Left colon (tissue), 2 donors: ENCODE measurements at regions of chr20 and their contacts with region 1.

Region 1: GRCh38 chr20:48620519-48621254 is 207.1 kb downstream of the PREX1 start:
- DNase-seq: peak; percentile 86 to 92
- ATAC-seq: peak; percentile 90

Region 2: DNA sequence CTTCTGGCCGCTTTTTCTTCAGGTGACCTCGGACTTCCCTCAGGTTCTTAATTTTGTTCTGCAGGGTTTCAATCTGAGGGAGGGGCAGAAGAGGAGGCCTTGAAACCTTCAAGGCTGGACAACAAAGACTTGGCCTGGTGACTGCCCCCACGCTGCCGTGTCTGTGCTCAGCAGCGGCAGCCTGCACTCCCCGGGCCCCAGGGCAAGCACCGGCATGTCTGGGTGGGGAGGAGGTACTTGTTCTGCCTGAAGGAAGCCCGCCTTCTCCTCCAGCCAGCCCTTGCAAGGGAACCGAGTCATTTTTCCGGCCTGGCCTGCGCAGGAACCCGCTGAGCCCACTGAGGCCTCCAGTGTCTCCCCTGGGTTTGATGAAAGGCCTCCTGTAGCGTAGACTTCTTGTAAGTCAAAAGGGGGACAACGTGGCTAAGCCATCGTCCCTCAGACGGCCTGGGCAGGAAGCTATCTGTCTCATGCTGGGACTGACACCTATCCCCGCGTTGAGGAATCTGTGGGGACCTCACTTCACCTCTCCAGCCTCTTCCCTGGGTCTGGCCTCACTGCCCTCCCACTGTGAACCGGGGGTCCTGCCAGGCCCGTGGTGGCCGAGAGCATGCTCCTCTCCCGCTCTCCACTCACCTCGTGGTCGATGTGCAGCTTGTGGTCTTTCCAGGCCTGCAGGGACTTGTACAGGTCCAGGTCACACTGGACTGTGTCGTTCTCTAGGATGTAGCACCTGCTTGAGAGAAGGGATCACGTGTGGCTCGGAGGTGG is 955.3 kb before region 1 on chr20:
- intact Hi-C with region 1: loop called in 1 of 2 experiments (anchors 5 kb)
- DNase-seq: no peak
- ATAC-seq: no peak

Region 3: DNA sequence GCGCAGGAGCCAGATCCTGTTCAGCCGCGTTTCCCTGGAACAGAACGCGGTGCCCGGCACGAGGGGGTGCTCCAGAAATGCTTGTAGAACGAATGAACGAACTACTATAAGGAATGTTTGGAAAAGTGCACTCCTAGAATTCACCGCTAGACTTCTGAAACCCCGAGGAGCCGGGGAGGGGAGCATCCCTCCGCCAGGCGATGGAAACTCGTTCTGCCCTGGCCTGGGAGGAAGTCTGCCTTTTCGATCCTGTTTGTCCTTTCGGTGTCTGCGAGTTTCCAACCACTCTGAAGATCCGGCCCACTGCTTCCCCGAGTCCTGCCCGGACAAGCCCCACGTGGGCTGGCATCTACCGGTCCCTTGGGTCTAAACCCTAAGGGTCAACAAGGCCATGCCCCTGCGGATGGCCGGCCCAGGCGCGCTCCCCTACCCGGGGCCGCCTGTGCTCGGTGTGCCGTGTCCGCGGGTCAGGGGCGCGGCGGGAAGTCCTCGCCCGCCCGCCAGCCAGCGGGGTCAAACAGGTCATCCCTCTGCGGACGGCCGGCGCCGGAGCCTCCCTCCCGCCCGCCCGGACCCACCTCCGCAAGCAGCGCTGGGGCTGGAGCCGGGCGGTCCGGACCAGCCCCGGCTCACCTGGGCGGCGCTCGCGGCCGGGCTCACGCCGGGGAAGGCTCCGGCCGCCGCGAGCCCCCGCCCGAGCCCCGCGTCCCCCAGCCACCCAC is 835.9 kb before region 1 on chr20:
- intact Hi-C with region 1: loop called in 1 of 2 experiments (anchors 5 kb)
- DNase-seq: peak in 1 of 2 donors; percentile 41
- ATAC-seq: peak; percentile 37

Region 4: DNA sequence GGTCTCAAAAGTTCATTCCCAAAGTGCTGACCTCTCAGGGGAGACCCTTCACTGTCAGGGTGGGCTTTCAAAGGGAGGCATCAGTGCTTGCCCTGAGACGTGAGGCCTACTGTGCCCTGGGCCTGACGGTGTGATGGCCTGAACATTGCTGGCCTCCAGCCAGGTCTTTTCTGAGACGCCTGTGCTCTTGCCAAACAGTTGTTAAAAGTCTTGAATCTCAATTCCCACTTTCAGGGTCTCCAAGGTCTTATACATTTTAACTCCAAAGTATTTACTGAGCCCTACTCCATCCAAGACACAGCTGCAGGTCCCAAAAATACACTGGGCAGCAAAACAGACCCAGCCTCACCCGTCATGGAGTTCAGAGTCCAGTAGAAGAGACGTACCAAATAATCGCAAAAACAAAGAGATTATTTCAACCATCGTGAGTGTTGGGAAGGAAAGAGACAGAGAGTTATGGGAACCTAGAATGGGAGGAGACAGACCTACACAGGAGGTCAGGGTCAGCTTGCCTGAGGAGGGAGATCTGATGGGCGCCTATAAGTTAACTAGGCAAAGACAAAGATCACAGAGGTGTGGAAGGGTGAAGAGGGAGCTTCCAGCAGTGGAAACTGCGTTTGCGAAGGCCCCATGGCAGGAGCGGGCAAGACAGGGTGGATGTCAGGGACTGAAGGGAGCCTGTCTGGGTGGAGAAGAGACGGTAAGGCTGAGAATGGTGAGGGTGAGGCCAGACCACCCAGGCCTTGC is 239.2 kb before region 1 on chr20:
- intact Hi-C with region 1: no loop called
- DNase-seq: no peak
- ATAC-seq: no peak

Region 5: DNA sequence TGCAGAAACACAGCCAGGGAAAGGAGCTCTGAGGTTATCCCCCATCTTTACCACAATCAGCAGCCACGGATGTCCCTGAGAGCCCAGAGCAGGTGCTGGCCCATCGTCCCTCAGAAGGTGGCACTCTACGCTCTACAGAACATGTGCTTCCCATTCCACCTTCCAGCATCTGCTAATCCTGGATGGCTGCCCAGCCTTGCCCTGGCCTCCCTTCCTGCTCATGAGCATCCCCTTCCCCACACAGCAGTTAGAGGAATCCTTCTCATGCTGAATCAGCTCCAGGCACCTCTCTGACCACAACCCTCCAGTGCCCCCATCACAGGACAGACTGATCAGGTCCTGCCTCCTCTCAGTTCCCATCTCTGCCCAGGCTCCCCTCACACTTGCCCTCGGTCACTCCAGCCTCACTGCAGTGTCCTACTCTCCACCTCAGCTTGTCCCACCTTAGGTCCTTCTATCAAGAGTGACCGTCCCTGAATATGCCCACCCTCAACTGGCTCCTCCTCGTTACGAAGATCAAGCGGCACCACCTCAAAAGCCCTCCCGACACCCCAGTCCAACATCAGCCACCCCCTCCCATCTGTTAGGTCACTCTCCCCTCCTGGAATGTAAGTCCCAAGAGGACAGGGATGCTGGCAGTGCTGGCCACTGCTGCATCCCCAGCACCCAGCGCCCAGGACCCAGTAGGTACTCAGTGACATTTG is 75.5 kb before region 1 on chr20:
- intact Hi-C with region 1: no loop called
- DNase-seq: peak in 1 of 2 donors; percentile 48
- ATAC-seq: peak; percentile 86

Region 6: GRCh38 chr20:48738399-48739304 is 118.0 kb after region 1 on chr20:
- intact Hi-C with region 1: no loop called
- DNase-seq: peak in 1 of 2 donors; percentile 50
- ATAC-seq: peak; percentile 85